Activated T-helper 2 cell treated with anti-CD3 and anti-CD28 coated beads, Interferon-gamma antibody, Interleukin-2, Interleukin-4, amounts not matched to agents 10 μg/mL and 5 μg/mL and 100 μg/mL, durations not matched to agents 14 hours and 24 hours and 36 hours (primary cell): ENCODE measurements at regions of chr13 and their contacts with region 1.

Region 1: GRCh38 chr13:20566898-20567874 is at the start of gene IFT88:
- DNase-seq: peak; percentile 82
- H3K4me3 Mint-ChIP-seq: peak within 1 kb of the TSS; percentile 87
- H3K27ac Mint-ChIP-seq: peak within 1 kb of the TSS; percentile 84
- H3K4me1 Mint-ChIP-seq: peaks cover 12% of the 10 kb centered on the region
- H3K27me3 Mint-ChIP-seq: no peaks in the 10 kb centered on the region
- total RNA-seq, gene IFT88: 2.1 and 2.6 TPM in 2 replicates

Region 2: GRCh38 chr13:19657872-19658591 is 909.2 kb before region 1 on chr13:
- intact Hi-C with region 1: no loop called
- DNase-seq: no peak
- H3K4me3 Mint-ChIP-seq: no peak overlapping the region
- H3K27ac Mint-ChIP-seq: no peak overlapping the region
- H3K4me1 Mint-ChIP-seq: no peaks in the 10 kb centered on the region
- H3K27me3 Mint-ChIP-seq: no peaks in the 10 kb centered on the region

Region 3: DNA sequence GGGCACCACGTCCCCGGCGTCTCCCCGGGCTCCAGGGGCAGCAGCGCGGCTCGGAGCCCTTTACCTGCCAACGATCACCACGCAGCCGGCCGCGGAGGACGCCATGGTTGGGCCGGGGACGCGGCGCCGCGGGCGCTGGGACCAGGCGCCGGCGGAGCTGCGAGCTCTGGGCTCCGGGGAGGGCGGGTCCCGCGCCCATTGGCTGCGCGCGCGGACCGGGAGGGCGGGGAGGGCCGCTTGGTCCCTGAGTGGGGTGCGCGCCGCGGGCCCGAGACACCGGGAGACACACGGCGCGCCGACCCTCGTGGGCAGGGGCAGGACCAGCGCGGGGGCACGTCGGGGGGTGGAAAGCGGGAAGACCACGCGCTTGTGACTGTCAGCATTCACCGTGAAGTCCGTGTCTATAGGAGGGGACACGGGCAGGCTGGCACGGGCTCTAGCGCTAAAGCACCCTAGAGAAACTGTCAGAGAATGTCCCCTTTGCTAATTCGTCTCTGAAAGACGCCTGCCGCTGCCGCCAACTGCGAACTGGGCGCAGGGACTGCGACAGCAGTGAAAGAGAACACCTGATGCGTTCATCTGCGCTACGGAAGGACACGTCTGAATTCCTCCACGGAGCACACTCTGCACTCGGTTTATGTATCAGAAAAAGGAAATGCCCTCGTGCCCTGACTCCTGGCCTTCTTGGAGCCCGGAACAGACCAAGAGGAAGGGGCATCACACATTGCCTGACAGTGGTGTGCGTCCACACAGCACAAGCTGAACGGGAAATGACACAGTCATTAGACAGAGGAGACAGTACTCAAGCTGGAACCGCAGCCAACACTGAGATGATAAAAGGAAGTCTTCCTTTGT is 41.3 kb before region 1 on chr13 and contains the start of gene CRYL1:
- intact Hi-C with region 1: loop called (anchors 2 kb)
- DNase-seq: peak; percentile 60
- H3K4me3 Mint-ChIP-seq: peak within 1 kb of the TSS; percentile 83
- H3K27ac Mint-ChIP-seq: peak within 1 kb of the TSS; percentile 89
- H3K4me1 Mint-ChIP-seq: peaks cover 21% of the 10 kb centered on the region
- H3K27me3 Mint-ChIP-seq: no peaks in the 10 kb centered on the region
- total RNA-seq, gene CRYL1: 8.7 TPM in 2 replicates

Region 4: GRCh38 chr13:20969182-20969581 is 402.0 kb after region 1 on chr13:
- intact Hi-C with region 1: no loop called
- DNase-seq: no peak
- H3K4me3 Mint-ChIP-seq: no peak overlapping the region
- H3K27ac Mint-ChIP-seq: no peak overlapping the region
- H3K4me1 Mint-ChIP-seq: peaks cover 11% of the 10 kb centered on the region
- H3K27me3 Mint-ChIP-seq: peaks cover 5% of the 10 kb centered on the region